ENCODE measurements at regions of chrX and their contacts with region 1.

Region 1: DNA sequence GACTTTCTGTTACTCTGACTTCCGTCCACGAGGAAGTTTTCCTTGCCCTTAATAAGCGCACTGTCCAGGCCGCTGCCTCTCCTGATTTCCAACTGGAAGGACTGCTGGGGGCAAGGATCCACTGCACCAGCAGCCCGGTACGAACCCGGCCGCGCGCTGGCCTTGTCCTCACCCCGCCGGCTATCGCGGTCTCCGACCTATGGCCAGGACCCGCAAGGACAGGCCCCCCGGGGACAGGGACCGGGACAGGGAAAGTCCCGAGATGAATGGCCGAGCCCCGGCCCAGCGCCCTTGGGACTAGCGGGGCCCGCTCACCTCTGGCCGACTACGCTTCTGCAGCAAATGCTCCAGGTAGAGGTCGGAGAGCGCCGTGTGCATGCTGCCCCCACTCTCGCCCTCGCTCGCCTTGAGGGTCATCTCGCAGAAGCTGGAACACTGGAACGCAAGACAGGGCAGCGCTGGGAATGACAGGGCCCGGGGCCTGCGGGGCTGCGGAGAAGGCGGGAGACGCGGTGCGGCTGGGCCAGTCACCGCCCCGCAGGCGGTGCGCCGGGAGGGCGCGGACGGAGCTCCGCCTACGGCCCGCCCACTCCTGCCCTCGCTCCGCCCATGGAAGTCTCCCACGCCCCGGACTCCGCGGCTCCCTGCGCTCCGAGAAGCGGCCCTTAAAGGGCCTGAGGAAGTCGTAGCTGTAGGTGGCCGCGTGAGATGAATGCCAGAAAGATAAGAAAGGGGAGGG is at the start of gene MPP1:
- DNase-seq: peak; percentile 74
- ATAC-seq: peak; percentile 99
- H3K4me3 Mint-ChIP-seq: peak within 1 kb of the TSS; percentile 86
- H3K27ac Mint-ChIP-seq: peak within 1 kb of the TSS; percentile 66
- H3K4me1 Mint-ChIP-seq: peaks cover 12% of the 10 kb centered on the region
- H3K27me3 Mint-ChIP-seq: no peaks in the 10 kb centered on the region
- CTCF ChIP-seq: no peak
- total RNA-seq, gene MPP1: 5.8 and 7.2 TPM in 2 replicates

Region 2: DNA sequence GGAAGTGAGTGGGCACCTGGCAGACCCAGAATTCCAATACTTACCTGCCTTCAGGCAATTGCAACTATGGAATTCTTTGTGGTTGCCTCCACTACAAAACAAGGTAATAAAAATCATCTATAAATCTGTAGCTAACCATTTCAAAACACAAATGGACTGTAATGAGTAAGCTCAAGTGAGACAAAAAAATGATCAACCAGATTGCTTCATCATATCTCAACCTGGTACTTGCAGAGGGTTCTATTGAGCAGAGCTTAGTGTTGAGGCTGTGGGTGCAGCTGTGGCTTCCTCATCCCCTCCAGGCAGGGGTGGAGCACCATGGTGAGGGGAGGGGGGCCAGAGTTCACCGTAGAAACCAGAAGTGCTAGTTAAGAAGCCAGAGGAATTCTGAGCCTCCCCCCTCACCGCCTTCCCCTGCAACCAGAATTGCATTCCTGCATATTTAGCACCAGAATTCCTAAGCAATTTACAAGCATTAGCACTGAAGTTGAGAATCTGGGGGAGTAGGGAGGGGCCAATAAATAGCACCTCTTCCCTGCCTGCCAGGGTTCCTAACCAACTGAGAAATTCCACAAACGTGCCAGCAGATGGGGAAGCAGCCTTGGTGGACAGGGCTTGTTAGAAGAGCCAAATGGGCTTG is 208.7 kb before region 1 on chrX:
- CTCF ChIA-PET with region 1: no interaction called
- POLR2A ChIA-PET with region 1: no interaction called
- intact Hi-C with region 1: no loop called
- DNase-seq: no peak
- ATAC-seq: no peak
- H3K4me3 Mint-ChIP-seq: no peak overlapping the region
- H3K27ac Mint-ChIP-seq: no peak overlapping the region
- H3K4me1 Mint-ChIP-seq: no peaks in the 10 kb centered on the region
- H3K27me3 Mint-ChIP-seq: peaks cover 9% of the 10 kb centered on the region
- CTCF ChIP-seq: no peak

Region 3: DNA sequence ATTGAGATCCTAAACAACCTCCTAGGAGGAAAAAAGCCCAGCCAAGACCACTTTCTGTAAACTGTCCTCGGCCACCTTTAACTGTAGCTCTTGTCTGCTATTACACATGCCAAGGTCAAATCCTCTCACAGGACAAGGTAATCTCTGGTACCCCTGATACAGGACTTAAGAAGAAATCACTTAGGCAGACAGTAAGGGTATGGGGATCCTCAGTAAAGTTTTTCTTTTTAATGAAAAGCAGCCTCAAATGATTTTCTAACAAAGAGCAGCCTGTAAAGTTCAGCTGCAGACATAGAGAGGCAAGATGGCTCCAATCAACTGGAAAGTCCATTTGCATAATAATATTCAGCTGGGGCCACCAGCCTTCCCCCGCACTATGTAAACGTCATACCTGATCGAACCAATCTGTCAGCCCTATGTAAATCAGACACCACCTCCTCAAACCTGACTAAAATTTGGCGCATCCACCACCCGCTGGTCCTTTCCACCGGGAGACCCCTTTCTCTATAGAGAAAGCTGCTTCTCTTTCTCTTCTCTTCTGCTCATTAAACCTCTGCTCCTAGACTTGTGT is 14.7 kb after region 1 on chrX:
- CTCF ChIA-PET with region 1: no interaction called
- POLR2A ChIA-PET with region 1: interaction called, 4 read pairs
- intact Hi-C with region 1: loop called (anchors 1 kb)
- DNase-seq: no peak
- ATAC-seq: peak; percentile 95
- H3K4me3 Mint-ChIP-seq: peak overlapping the region; percentile 53
- H3K27ac Mint-ChIP-seq: peak overlapping the region; percentile 84
- H3K4me1 Mint-ChIP-seq: peaks cover 18% of the 10 kb centered on the region
- H3K27me3 Mint-ChIP-seq: no peaks in the 10 kb centered on the region
- CTCF ChIP-seq: no peak

Region 4: DNA sequence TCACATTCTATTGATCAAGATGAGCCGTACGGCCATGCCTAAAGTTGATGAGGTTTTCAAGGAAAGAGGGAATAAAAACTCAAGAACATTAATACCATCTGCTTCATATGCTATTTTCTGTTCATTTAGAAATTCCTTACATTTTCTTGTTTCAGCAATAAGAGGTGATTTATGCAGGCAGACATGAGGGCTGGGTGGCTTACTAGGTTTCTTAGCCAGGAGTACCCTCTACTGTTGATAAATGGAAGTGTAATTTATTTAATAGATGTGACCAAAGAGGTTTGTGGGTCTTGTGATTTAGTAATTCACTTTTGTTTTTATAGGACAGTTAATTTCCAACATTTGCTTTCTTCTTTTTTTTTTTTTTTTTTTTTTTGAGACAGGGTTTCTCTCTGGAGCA is 35.7 kb after region 1 on chrX:
- CTCF ChIA-PET with region 1: no interaction called
- POLR2A ChIA-PET with region 1: no interaction called
- intact Hi-C with region 1: loop called (anchors 5 kb)
- DNase-seq: no peak
- ATAC-seq: peak; percentile 66
- H3K4me3 Mint-ChIP-seq: no peak overlapping the region
- H3K27ac Mint-ChIP-seq: no peak overlapping the region
- H3K4me1 Mint-ChIP-seq: no peaks in the 10 kb centered on the region
- H3K27me3 Mint-ChIP-seq: no peaks in the 10 kb centered on the region
- CTCF ChIP-seq: no peak

Region 5: DNA sequence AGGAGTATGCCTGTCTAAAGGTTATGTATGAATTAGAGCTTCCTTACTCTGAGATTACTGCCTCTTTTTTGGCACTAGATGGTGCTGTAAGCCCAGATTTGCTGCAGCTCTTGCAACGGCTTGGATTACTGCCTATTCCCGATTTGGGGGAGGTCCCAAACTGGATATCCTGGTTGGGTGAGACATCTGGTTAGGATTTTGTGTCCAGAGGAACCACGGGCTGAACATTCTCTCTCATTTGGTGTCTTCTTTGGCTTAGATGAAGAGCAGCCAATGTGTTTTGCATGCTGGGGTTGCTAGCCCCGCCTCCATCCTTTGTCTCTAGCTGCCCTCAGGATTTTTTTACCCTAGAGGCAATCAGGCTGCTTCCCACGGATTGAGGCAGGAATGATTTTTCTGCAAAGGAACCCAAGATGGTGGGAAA is 112.9 kb after region 1 on chrX:
- CTCF ChIA-PET with region 1: no interaction called
- POLR2A ChIA-PET with region 1: no interaction called
- intact Hi-C with region 1: no loop called
- DNase-seq: peak; percentile 14
- ATAC-seq: peak; percentile 31
- H3K4me3 Mint-ChIP-seq: peak overlapping the region; percentile 59
- H3K27ac Mint-ChIP-seq: no peak overlapping the region
- H3K4me1 Mint-ChIP-seq: peaks cover 2% of the 10 kb centered on the region
- H3K27me3 Mint-ChIP-seq: peaks cover 2% of the 10 kb centered on the region
- CTCF ChIP-seq: no peak